ENCODE measurements at regions of chr22 and their contacts with region 1.

Region 1: GRCh38 chr22:23970816-23971486 is 3.3 kb downstream of the DDT start:
- DNase-seq: peak in 1 of 3 donors; percentile 45
- ATAC-seq: no peak
- H3K4me3 ChIP-seq: no peak overlapping the region
- H3K27ac ChIP-seq: no peak overlapping the region
- H3K4me1 ChIP-seq: peaks cover 2% of the 10 kb centered on the region
- H3K27me3 ChIP-seq: no peaks in the 10 kb centered on the region

Region 2: DNA sequence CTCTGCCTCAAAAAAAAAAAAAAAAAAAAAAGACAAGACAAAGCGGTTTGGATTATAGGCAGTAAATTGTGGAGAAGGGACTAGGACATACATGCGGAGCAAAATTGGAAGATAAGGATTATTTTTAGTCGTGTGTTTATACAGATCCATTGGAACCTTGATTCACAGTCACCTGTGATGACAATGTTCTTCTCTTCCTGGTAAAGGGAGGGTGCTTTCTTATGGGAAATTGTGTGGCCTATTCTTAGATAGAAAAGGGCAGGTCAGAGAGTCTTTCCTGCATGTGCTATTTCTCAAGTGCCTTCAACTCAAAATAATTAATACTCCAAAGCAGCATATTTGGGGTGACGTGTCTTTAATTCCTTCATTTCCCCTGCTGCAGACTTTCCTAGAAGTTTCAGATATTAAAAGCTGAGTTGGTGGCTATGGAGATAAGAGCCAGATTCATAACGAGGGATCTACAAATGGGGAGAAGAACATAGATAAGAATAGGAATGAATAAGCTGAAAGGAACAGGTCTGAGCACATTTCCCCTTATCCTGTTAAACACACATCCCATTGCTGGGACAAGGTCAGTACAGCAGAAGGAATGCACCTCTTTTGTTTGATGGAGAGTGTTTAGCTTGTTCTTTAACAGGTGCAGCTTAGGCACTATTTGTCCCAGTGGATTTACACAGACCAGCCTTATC is 32.5 kb before region 1 on chr22:
- intact Hi-C with region 1: loop called in 1 of 4 experiments (anchors 5 kb)
- DNase-seq: no peak
- ATAC-seq: peak; percentile 24 to 63
- H3K4me3 ChIP-seq: no peak overlapping the region
- H3K27ac ChIP-seq: no peak overlapping the region
- H3K4me1 ChIP-seq: no peaks in the 10 kb centered on the region
- H3K27me3 ChIP-seq: no peaks in the 10 kb centered on the region

Measured in right cardiac atrium (tissue), 5 donors.